AG04450 (cell line): ENCODE measurements at regions of chr6 and their contacts with region 1.

Region 1: GRCh38 chr6:122839477-122839876 is 50.4 kb downstream of the SMPDL3A start:
- DNase-seq: no peak
- H3K4me3 ChIP-seq: no peak overlapping the region
- H3K27ac ChIP-seq: no peak overlapping the region
- H3K27me3 ChIP-seq: peaks cover 3% of the 10 kb centered on the region
- CTCF ChIP-seq: peak; percentile 75

Region 2: DNA sequence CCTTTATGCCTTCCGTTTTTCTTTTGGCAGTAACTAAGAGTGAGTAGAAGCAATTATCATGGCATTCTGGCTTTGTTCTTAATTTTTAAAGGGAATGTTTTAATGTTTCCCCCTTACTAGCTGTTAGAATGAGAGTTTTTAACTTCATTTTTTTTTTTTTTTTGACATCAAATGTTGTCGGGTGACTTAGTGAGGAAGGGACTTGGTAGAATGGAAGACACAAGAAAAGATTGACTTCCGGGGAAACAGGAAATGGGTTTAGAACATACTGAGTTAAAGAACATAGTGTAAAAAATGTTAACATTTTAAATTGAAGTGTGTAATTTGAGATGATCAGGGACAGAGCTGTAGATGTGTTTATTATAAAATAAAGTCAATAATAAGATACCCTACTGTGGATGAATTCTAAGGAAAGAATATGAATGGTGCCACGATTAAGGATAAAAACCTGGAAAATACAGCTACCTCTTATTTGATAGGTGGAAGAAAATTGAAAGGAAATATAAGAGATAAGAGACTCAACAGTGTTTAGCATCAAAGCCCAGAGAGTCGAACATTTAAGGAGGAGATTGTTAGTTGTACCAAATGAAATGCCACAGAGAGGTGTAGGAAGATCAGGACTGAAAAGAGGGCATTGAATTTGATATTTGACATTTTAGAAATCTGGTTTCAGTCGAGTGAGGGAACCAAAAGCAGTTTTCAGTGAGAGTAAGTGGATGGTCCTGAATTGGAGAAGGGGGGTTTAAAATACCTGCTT is 430.6 kb before region 1 on chr6:
- CTCF ChIA-PET with region 1: no interaction called
- POLR2A ChIA-PET with region 1: no interaction called
- DNase-seq: no peak
- H3K4me3 ChIP-seq: no peak overlapping the region
- H3K27ac ChIP-seq: no peak overlapping the region
- H3K27me3 ChIP-seq: no peaks in the 10 kb centered on the region
- CTCF ChIP-seq: no peak

Region 3: DNA sequence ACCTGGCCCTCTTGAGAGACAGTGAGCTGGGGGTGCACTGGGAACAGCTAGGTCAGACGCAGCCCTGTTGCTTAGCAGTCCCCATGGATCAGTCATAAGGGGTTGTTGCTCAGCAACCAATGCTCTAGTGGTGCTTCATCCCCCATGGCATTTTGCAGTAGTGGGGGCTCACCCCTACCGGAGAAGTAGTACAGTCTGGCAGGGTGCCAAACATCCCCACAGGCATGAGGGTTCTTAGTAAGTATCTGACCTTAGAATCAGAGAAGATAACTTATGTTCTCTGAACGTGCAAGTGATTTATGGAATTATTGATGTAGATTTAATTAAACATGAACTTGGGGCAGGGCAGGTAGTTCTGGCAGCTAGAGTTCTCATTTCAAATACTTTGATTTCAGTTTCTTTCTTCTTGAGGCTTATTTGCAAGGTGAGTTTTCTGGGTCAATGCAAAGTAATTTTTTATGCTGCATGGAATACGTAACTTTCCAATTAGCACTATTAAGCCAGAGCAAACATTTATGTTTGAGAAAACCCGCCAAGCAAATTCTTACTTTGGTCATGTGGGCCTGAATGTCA is 216.8 kb before region 1 on chr6:
- CTCF ChIA-PET with region 1: no interaction called
- POLR2A ChIA-PET with region 1: no interaction called
- DNase-seq: no peak
- H3K4me3 ChIP-seq: no peak overlapping the region
- H3K27ac ChIP-seq: no peak overlapping the region
- H3K27me3 ChIP-seq: no peaks in the 10 kb centered on the region
- CTCF ChIP-seq: no peak

Region 4: GRCh38 chr6:122696079-122696478 is 143.4 kb before region 1 on chr6:
- CTCF ChIA-PET with region 1: interaction called, 12 read pairs
- POLR2A ChIA-PET with region 1: no interaction called
- DNase-seq: peak; percentile 59
- H3K4me3 ChIP-seq: no peak overlapping the region
- H3K27ac ChIP-seq: peak overlapping the region; percentile 60
- H3K27me3 ChIP-seq: no peaks in the 10 kb centered on the region
- CTCF ChIP-seq: no peak

Region 5: GRCh38 chr6:122730775-122731386 is 108.6 kb before region 1 on chr6:
- CTCF ChIA-PET with region 1: interaction called, 406 read pairs
- POLR2A ChIA-PET with region 1: no interaction called
- DNase-seq: no peak
- H3K4me3 ChIP-seq: no peak overlapping the region
- H3K27ac ChIP-seq: no peak overlapping the region
- H3K27me3 ChIP-seq: peaks cover 5% of the 10 kb centered on the region
- CTCF ChIP-seq: peak; percentile 84

Region 6: GRCh38 chr6:122770835-122771601 is 68.5 kb before region 1 on chr6:
- CTCF ChIA-PET with region 1: interaction called, 10 read pairs
- POLR2A ChIA-PET with region 1: no interaction called
- DNase-seq: no peak
- H3K4me3 ChIP-seq: no peak overlapping the region
- H3K27ac ChIP-seq: no peak overlapping the region
- H3K27me3 ChIP-seq: no peaks in the 10 kb centered on the region
- CTCF ChIP-seq: no peak

Region 7: DNA sequence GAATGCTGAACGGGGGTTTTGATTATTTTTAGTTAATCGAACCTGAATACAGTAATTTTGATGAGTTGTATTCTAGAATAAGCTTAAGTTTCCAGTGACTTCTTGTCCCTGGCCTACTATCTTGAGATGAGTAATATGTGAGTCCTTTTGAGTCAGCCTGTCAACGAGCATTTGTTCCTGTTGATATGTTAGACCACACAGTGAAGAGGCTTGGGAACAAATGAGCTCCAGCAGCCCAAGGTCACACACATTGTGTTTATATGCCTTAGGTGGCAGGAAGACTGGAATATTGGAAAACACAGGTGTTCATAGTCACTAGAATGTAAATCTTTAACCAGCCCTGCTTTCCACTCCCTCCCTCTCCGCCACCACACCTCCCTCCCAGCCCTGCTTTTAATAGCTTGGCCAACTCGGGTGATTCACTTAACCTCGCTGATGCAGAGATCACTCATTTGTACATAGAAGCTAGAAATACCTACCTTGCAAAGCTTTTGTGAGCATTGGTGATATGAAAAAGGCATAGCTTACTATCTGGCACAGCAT is 41.3 kb before region 1 on chr6:
- CTCF ChIA-PET with region 1: interaction called, 19 read pairs
- POLR2A ChIA-PET with region 1: no interaction called
- DNase-seq: no peak
- H3K4me3 ChIP-seq: no peak overlapping the region
- H3K27ac ChIP-seq: peak overlapping the region; percentile 25
- H3K27me3 ChIP-seq: no peaks in the 10 kb centered on the region
- CTCF ChIP-seq: no peak

Region 8: DNA sequence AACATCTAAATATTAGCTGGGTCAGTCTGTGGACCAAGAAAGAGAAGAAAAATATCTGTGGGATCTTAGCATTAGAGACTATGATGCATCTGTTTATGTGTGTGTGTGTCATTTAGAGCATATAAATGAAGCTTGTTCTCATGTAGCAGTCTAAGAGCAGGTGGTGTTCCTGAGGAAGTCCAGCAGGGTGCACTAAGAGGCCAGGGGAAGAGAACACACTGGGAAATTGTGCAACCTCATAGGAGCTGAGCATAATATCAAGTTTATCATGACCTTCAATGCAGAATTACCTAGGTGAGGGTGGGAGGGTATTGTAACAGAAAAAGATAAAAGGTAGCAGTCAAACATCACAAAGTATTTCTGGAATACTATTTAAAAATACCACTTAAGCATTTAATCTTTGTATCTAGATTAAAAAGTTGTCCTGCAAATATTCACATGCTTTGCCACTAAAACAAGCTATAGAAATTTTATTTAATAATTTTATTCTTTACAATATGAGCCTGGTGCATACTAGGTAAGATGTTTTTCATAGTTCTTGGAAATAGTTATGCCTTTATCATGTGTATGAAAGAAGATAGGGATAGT is 30.1 kb after region 1 on chr6:
- CTCF ChIA-PET with region 1: interaction called, 11 read pairs
- POLR2A ChIA-PET with region 1: no interaction called
- DNase-seq: peak; percentile 8
- H3K4me3 ChIP-seq: no peak overlapping the region
- H3K27ac ChIP-seq: no peak overlapping the region
- H3K27me3 ChIP-seq: no peaks in the 10 kb centered on the region
- CTCF ChIP-seq: peak; percentile 68